ENCODE measurements at regions of chr5 and their contacts with region 1.

Region 1: DNA sequence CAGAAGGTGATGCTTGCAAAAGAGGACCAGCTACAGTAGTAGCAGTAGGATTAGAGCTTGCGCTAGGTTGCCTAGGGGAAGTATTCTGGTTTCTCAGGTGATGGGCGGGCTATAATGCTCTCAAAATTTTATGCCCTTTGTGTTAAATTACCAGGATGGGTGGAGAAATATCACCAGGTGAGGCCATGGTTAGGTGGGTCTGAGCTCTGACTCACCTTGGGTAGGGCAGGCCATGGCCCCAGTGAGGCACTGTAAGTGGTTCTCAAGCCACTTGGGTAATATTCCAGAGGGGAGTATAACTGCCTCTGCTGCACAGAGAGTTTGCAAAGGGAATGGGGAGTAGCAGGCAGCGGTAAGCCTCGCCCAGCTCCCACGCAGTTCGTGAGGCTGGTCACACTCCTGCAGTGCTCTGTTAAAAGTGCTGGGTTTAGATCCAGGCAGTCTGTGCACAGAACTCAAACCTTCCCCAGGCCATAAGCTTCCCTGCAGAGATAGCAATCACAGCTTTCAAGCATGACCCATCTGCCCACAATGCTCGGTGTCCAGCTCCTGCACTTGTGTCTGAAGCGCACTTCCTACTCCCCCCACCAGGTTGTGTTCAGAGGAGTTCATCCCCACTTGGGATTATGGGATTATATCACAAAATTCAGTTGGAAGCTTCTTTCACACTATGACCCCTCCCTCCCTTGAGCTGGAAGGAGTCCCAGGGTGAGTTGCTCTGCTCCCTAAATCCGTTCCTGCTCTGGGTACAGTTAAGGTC is 575.0 kb downstream of the CHSY3 start:
- DNase-seq: no peak
- ATAC-seq: no peak
- H3K4me3 ChIP-seq: no peak overlapping the region
- H3K27ac ChIP-seq: no peak overlapping the region
- H3K4me1 ChIP-seq: no peaks in the 10 kb centered on the region
- H3K27me3 ChIP-seq: no peaks in the 10 kb centered on the region
- CTCF ChIP-seq: no peak
- POLR2A ChIP-seq: no peak

Region 2: GRCh38 chr5:130496215-130496614 is 17.0 kb after region 1 on chr5:
- intact Hi-C with region 1: loop called in 1 of 10 experiments (anchors 1 kb)
- DNase-seq: no peak
- ATAC-seq: no peak
- H3K4me3 ChIP-seq: no peak overlapping the region
- H3K27ac ChIP-seq: no peak overlapping the region
- H3K4me1 ChIP-seq: no peaks in the 10 kb centered on the region
- H3K27me3 ChIP-seq: no peaks in the 10 kb centered on the region
- CTCF ChIP-seq: no peak
- POLR2A ChIP-seq: no peak

Region 3: DNA sequence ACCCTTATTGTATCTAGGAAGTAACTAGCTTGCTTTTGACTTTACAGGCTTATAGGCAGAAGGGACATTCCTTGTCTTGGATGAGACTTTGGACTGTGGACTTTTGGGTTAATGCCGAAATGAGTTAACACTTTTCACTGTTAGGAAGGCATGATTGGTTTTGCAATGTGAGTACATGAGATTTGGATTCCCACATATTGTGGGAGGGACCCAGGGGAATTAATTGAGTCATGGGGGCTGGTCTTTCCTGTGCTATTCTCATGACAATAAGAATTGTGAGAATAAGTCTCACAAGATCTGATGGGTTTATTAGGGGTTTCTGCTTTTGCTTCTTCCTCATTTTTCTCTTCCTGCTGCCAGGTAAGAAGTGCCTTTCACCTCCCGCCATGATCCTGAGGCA is 268.3 kb after region 1 on chr5:
- intact Hi-C with region 1: no loop called
- DNase-seq: no peak
- ATAC-seq: no peak
- H3K4me3 ChIP-seq: no peak overlapping the region
- H3K27ac ChIP-seq: no peak overlapping the region
- H3K4me1 ChIP-seq: no peaks in the 10 kb centered on the region
- H3K27me3 ChIP-seq: no peaks in the 10 kb centered on the region
- CTCF ChIP-seq: no peak
- POLR2A ChIP-seq: no peak